Psoas muscle (tissue), 8 donors: ENCODE measurements at regions of chr7 and their contacts with region 1.

Region 1: GRCh38 chr7:100393233-100393905 is 20.1 kb downstream of the PILRA start:
- DNase-seq: no peak
- ATAC-seq: no peak
- H3K4me3 ChIP-seq: no peak overlapping the region
- H3K27ac ChIP-seq: no peak overlapping the region
- H3K4me1 ChIP-seq: no peaks in the 10 kb centered on the region
- H3K27me3 ChIP-seq: no peaks in the 10 kb centered on the region
- CTCF ChIP-seq: no peak

Region 2: DNA sequence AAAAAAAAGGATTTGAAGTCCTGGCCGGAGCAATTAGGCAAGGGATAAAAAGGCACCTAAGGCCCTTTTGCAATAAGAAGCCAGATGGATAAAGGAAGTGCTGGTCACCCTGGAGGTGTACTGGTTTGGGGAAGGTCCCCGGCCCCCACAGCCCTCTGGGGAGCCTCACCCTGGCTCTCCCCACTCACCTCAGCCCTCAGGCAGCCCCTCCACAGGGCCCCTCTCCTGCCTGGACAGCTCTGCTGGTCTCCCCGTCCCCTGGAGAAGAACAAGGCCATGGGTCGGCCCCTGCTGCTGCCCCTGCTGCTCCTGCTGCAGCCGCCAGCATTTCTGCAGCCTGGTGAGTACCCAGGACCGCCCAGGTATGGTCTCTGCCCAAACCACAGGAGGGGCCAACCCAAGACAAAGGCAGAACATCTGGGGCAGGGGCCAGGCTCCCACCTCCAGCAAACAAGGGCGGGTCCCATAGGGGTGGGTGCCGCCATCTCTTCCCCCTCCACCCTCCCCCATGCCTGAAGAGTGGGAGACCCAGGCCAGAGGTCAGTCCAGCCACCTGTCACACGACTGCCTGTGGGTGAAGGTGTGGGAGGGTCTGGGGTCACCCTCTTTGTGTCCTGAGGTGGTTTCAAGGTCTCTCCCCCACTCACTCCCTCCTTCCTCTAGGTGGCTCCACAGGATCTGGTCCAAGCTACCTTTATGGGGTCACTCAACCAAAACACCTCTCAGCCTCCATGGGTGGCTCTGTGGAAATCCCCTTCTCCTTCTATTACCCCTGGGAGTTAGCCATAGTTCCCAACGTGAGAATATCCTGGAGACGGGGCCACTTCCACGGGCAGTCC is 35.1 kb before region 1 on chr7 and contains the start of gene PILRB:
- intact Hi-C with region 1: loop called in 1 of 2 experiments (anchors 5 kb)
- DNase-seq: peak in 1 of 2 donors; percentile 43
- ATAC-seq: peak in 2 of 4 donors; percentile 14 to 26
- H3K4me3 ChIP-seq: no peak within 1 kb of the TSS
- H3K27ac ChIP-seq: no peak within 1 kb of the TSS
- H3K4me1 ChIP-seq: no peaks in the 10 kb centered on the region
- H3K27me3 ChIP-seq: no peaks in the 10 kb centered on the region
- CTCF ChIP-seq: no peak
- total RNA-seq, gene PILRB: 11.3 to 19.2 (median 13.4) TPM